ENCODE measurements at regions of chr16 and their contacts with region 1.

Region 1: GRCh38 chr16:53435066-53435688 is 906 bp downstream of the RBL2 start:
- H3K4me3 Mint-ChIP-seq: peak overlapping the region; percentile 97
- H3K27ac Mint-ChIP-seq: peak overlapping the region; percentile 97
- H3K4me1 Mint-ChIP-seq: peaks cover 15% of the 10 kb centered on the region
- H3K27me3 Mint-ChIP-seq: peaks cover 1% of the 10 kb centered on the region

Region 2: DNA sequence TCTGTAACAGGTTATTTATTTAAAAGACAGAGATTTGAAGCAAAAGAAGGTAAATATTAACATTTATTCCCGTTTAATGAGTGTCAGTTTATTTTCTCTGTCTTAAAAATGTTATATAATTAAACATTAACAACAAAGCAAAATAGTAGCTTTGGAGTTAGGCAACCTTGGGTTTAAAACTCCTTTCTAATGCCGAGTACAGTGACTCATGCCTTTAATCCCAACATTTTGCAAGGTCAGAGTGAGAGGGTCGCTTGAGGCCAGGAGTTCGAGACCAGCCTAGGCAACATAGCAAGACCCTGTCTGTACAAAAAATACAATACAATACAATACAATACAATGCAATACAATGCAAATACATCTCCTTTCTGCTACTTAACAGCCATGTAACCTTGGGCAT is 251.7 kb before region 1 on chr16:
- intact Hi-C with region 1: no loop called
- H3K4me3 Mint-ChIP-seq: no peak overlapping the region
- H3K27ac Mint-ChIP-seq: no peak overlapping the region
- H3K4me1 Mint-ChIP-seq: no peaks in the 10 kb centered on the region
- H3K27me3 Mint-ChIP-seq: no peaks in the 10 kb centered on the region

Region 3: GRCh38 chr16:53219795-53220454 is 215.3 kb before region 1 on chr16:
- intact Hi-C with region 1: loop called (anchors 10 kb)
- H3K4me3 Mint-ChIP-seq: no peak overlapping the region
- H3K27ac Mint-ChIP-seq: no peak overlapping the region
- H3K4me1 Mint-ChIP-seq: peaks cover 13% of the 10 kb centered on the region
- H3K27me3 Mint-ChIP-seq: no peaks in the 10 kb centered on the region

Region 4: GRCh38 chr16:53503270-53503923 is 68.2 kb after region 1 on chr16:
- intact Hi-C with region 1: loop called (anchors 2 kb)
- H3K4me3 Mint-ChIP-seq: peak overlapping the region; percentile 91
- H3K27ac Mint-ChIP-seq: peak overlapping the region; percentile 93
- H3K4me1 Mint-ChIP-seq: peaks cover 33% of the 10 kb centered on the region
- H3K27me3 Mint-ChIP-seq: peaks cover 15% of the 10 kb centered on the region

Region 5: DNA sequence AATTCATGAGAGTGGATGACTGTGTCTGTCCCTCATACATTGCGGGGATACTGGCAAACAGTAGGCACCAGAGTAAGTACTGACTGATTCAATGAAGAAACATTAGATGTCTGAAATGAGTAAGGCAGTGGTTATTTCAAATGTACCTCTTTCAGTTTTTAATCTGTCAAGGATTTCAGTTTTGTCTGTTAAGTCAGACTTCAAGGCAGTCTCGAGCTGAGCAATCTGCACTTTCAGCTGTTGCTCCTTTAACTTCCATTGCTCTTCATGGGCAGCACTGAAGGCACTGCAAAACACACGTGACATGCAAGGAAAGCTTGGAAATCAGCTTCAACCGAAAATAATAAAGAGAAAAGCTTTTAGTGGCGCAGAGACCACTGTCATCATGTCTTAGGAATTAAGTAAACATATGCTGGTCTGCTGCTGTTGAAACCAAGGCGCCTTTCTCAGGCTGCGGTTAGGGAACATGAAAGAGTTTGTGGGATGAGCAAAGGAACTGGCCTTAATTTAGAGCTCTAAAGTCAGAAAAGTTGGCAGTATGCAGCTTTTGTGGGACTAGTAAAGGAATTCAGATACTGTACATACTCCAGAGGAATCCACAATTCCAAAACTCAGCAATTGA is 229.7 kb after region 1 on chr16:
- intact Hi-C with region 1: no loop called
- H3K4me3 Mint-ChIP-seq: no peak overlapping the region
- H3K27ac Mint-ChIP-seq: no peak overlapping the region
- H3K4me1 Mint-ChIP-seq: no peaks in the 10 kb centered on the region
- H3K27me3 Mint-ChIP-seq: no peaks in the 10 kb centered on the region

Region 6: GRCh38 chr16:53703590-53704444 is 268.6 kb after region 1 on chr16 and contains the starts of genes FTO and RPGRIP1L:
- intact Hi-C with region 1: loop called (anchors 10 kb)
- H3K4me3 Mint-ChIP-seq: peak within 1 kb of the TSS; percentile 88
- H3K27ac Mint-ChIP-seq: peak within 1 kb of the TSS; percentile 83
- H3K4me1 Mint-ChIP-seq: peaks cover 31% of the 10 kb centered on the region
- H3K27me3 Mint-ChIP-seq: no peaks in the 10 kb centered on the region